ENCODE measurements at regions of chr1 and their contacts with region 1.

Region 1: DNA sequence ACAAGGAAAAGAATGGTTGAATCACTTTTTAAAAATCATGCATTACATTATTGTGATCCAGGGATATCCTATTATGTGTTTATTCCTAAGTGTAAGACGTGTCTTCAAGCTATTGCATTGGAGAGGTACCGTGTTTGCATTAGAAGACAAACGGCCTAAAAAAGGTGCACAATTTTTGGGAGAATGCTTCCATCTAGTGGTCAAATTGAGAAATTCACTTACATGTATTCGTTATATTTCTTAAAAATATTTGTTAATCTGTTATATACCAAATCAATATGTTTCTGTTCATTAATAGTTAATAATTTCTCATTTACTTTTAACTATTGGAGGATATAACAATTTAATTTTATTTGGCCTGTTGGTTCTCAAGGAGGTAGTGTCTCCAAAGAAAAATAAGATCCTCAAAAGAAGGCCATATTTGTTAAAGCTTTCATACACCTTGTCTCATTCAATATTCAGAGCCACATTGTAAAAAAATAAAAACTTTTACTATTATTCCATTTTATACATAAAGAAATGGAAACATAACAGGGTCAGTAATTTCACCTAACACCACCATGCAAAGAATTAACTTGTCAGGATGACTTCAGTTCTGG is 40.5 kb upstream of the KCTD3 start:
- DNase-seq: no peak
- ATAC-seq: no peak
- H3K4me3 ChIP-seq: no peak overlapping the region
- H3K27ac ChIP-seq: no peak overlapping the region
- H3K4me1 ChIP-seq: no peaks in the 10 kb centered on the region
- H3K27me3 ChIP-seq: peaks cover 0 to 16% (median 0%) of the 10 kb centered on the region in 7 donors
- CTCF ChIP-seq: peak; percentile 43 to 79 (median 74)

Region 2: GRCh38 chr1:214623430-214623829 is 903.2 kb before region 1 on chr1:
- intact Hi-C with region 1: loop called in 4 of 10 experiments (anchors 2 to 10 kb)
- DNase-seq: no peak
- ATAC-seq: no peak
- H3K4me3 ChIP-seq: no peak overlapping the region
- H3K27ac ChIP-seq: no peak overlapping the region
- H3K4me1 ChIP-seq: no peaks in the 10 kb centered on the region
- H3K27me3 ChIP-seq: no peaks in the 10 kb centered on the region
- CTCF ChIP-seq: no peak

Region 3: DNA sequence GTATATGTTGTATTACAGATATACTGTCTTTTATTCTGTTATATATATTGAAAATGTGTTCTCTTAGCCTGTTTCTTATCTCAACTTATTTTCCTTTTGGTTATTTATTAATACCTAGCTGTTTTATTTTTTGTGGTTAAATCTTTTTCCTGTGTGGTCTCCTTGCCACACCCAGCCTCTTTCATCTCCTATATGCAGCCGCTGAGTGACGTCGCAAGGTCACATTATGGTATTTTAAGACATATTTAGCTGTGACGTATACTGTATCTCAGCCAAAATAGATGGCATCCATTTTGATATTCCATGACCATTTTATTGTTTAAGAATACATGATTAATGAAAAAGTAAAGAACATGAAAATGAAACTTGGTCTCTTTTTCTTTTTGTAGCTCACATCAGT is 894.6 kb before region 1 on chr1:
- intact Hi-C with region 1: loop called in 7 of 10 experiments (anchors 2 to 10 kb)
- DNase-seq: no peak
- ATAC-seq: no peak
- H3K4me3 ChIP-seq: no peak overlapping the region
- H3K27ac ChIP-seq: no peak overlapping the region
- H3K4me1 ChIP-seq: no peaks in the 10 kb centered on the region
- H3K27me3 ChIP-seq: no peaks in the 10 kb centered on the region
- CTCF ChIP-seq: no peak

Region 4: GRCh38 chr1:214637722-214638458 is 888.8 kb before region 1 on chr1:
- intact Hi-C with region 1: loop called in 3 of 10 experiments (anchors 10 kb)
- DNase-seq: no peak
- ATAC-seq: peak in 1 of 8 donors; percentile 47
- H3K4me3 ChIP-seq: no peak overlapping the region
- H3K27ac ChIP-seq: no peak overlapping the region
- H3K4me1 ChIP-seq: no peaks in the 10 kb centered on the region
- H3K27me3 ChIP-seq: no peaks in the 10 kb centered on the region
- CTCF ChIP-seq: peak; percentile 20 to 76 (median 67)

Region 5: DNA sequence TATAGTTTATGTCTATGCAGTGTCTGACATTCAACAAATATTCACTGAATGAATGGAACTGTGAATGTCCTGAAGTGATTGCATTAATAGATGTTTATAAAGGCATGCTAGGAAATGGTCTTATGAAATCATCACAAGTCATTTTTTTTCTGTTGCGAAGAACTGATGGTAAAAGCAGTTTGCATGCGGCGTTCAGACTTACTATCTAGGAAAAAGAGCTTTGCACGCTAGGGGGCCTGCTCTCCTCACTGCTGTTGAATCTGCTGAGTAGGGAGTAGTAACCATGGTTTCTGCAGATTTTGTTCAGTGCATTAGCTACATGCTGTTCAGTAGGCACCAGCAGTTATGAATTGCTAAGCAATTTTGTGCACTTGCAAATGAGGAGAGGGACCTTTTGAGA is 865.8 kb before region 1 on chr1:
- intact Hi-C with region 1: loop called in 5 of 10 experiments (anchors 5 to 10 kb)
- DNase-seq: no peak
- ATAC-seq: peak in 2 of 8 donors; percentile 58 to 62
- H3K4me3 ChIP-seq: no peak overlapping the region
- H3K27ac ChIP-seq: no peak overlapping the region
- H3K4me1 ChIP-seq: no peaks in the 10 kb centered on the region
- H3K27me3 ChIP-seq: no peaks in the 10 kb centered on the region
- CTCF ChIP-seq: peak in 7 of 9 donors; percentile 28 to 55 (median 37)

Region 6: DNA sequence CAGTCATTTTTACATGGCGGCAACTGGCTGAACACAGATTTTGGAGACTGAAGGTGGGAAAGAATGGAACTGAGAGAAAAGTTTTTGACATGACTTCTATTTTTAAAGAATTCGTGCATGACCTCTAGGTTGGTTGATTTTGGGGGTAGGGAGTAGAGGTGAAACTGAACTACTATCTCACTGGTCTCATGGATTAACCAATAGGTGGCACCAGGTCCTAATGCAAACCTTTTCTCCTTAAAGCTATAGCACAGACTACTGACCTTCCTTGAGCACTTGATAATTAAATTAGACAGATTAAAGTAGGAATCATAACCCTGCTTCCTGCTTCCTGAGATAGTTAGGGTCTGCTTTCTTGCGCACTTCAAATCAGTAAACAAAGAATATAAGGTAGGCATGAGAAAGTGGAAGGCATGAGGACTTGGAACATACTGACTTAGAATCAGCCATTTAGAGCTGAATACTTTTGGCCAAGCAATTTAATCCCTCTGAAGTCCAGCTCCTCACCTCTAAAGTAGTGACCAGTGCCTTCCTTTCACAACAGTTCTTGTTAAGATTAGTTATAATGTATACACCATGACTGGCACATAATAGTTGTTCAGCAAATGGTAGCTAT is 717.7 kb before region 1 on chr1:
- intact Hi-C with region 1: loop called in 1 of 10 experiments (anchors 10 kb)
- DNase-seq: no peak
- ATAC-seq: no peak
- H3K4me3 ChIP-seq: no peak overlapping the region
- H3K27ac ChIP-seq: no peak overlapping the region
- H3K4me1 ChIP-seq: no peaks in the 10 kb centered on the region
- H3K27me3 ChIP-seq: no peaks in the 10 kb centered on the region
- CTCF ChIP-seq: peak in 4 of 9 donors; percentile 10 to 31 (median 16)

Region 7: DNA sequence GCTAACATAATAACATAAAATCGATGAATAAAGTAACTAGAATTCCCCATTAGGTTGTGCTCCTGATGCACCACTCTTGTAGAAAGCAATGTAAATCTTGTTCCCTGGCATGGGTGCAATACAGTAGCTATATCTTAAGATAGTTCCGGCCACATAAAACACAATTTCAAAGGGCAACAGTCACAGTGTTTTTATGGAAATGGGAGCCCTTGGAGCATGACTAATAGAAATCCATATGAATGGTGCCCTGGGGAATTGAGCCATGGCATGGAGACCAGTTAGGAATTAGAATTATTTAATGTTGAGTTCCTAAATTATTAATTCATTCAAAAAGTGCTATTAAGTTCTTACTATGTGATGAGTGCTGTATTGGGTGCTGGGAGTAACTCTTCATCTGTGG is 325.4 kb before region 1 on chr1:
- intact Hi-C with region 1: no loop called
- DNase-seq: no peak
- ATAC-seq: no peak
- H3K4me3 ChIP-seq: no peak overlapping the region
- H3K27ac ChIP-seq: no peak overlapping the region
- H3K4me1 ChIP-seq: no peaks in the 10 kb centered on the region
- H3K27me3 ChIP-seq: no peaks in the 10 kb centered on the region
- CTCF ChIP-seq: no peak

Region 8: GRCh38 chr1:215405211-215405610 is 121.4 kb before region 1 on chr1:
- intact Hi-C with region 1: no loop called
- DNase-seq: no peak
- ATAC-seq: no peak
- H3K4me3 ChIP-seq: no peak overlapping the region
- H3K27ac ChIP-seq: no peak overlapping the region
- H3K4me1 ChIP-seq: peaks cover 0 to 6% (median 0%) of the 10 kb centered on the region in 9 donors
- H3K27me3 ChIP-seq: no peaks in the 10 kb centered on the region
- CTCF ChIP-seq: no peak

Region 9: GRCh38 chr1:215606564-215607168 is 80.0 kb after region 1 on chr1:
- intact Hi-C with region 1: no loop called
- DNase-seq: no peak
- ATAC-seq: no peak
- H3K4me3 ChIP-seq: no peak overlapping the region
- H3K27ac ChIP-seq: no peak overlapping the region
- H3K4me1 ChIP-seq: peaks cover 0 to 6% (median 4%) of the 10 kb centered on the region in 9 donors
- H3K27me3 ChIP-seq: no peaks in the 10 kb centered on the region
- CTCF ChIP-seq: peak; percentile 19 to 65 (median 49)